ENCODE measurements at regions of chr17 and their contacts with region 1.

Region 1: GRCh38 chr17:7818746-7819645 is 15.0 kb upstream of the KDM6B start:
- DNase-seq: no peak
- ATAC-seq: peak in 1 of 4 donors; percentile 8
- H3K4me3 ChIP-seq: no peak overlapping the region
- H3K27ac ChIP-seq: no peak overlapping the region
- H3K4me1 ChIP-seq: no peaks in the 10 kb centered on the region
- H3K27me3 ChIP-seq: no peaks in the 10 kb centered on the region
- CTCF ChIP-seq: no peak
- POLR2A ChIP-seq: no peak

Region 2: GRCh38 chr17:7745748-7746470 is 73.1 kb before region 1 on chr17:
- intact Hi-C with region 1: loop called in 6 of 10 experiments (anchors 2 to 10 kb)
- DNase-seq: no peak
- ATAC-seq: no peak
- H3K4me3 ChIP-seq: no peak overlapping the region
- H3K27ac ChIP-seq: no peak overlapping the region
- H3K4me1 ChIP-seq: peaks cover 0 to 10% (median 5%) of the 10 kb centered on the region in 12 donors
- H3K27me3 ChIP-seq: peaks cover 0 to 5% (median 0%) of the 10 kb centered on the region in 9 donors
- CTCF ChIP-seq: no peak
- POLR2A ChIP-seq: no peak

Region 3: DNA sequence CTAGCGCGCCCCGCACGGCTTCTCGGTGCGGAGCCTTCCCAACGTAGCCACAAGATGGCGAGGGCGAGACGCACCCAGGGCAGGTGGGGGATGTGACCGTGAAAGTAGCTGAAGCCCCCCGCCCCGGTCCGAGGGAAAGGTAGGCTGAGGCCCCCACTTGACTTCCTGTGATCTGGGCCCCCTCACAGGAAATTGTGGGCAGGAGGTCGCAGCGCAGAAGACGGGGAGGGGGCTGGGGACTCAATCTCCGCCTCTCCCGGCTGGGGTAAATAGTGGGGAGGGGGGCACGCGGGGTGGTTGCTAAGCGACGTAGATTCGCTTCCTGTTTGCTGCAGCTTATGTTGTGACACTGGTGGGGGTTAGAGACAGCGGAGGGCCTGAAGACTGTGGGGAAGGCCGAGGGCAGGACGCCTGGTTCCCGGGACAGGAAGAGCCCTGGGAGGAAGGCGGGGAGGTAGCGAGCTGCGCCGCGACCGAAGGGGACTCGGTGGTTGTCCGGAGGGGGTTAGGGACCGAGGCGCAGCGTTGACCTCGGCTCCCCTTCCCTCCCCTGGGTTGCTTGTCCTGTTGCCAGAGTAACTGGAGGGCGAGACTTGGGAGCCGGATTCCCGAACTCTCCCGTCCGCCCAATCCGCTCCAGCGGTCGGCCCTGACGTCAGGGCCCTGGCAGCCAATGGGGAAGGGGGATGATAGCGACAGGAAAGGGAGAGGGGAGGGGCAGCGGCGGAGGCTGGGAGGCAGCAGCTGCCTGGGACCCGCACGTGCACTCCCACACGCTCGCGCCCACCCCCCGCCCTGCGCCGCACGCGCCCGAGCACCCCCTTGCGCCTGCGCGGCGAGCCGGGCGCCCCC is 16.2 kb after region 1 on chr17:
- intact Hi-C with region 1: no loop called
- DNase-seq: peak; percentile 98 to 99 (median 99)
- ATAC-seq: peak; percentile 79 to 84 (median 82)
- H3K4me3 ChIP-seq: peak overlapping the region; percentile 59 to 99 (median 80)
- H3K27ac ChIP-seq: peak overlapping the region; percentile 86 to 100 (median 98)
- H3K4me1 ChIP-seq: peaks cover 0 to 56% (median 35%) of the 10 kb centered on the region in 12 donors
- H3K27me3 ChIP-seq: no peaks in the 10 kb centered on the region
- CTCF ChIP-seq: peak; percentile 56 to 94 (median 80)
- POLR2A ChIP-seq: peak; percentile 31 to 71

Region 4: DNA sequence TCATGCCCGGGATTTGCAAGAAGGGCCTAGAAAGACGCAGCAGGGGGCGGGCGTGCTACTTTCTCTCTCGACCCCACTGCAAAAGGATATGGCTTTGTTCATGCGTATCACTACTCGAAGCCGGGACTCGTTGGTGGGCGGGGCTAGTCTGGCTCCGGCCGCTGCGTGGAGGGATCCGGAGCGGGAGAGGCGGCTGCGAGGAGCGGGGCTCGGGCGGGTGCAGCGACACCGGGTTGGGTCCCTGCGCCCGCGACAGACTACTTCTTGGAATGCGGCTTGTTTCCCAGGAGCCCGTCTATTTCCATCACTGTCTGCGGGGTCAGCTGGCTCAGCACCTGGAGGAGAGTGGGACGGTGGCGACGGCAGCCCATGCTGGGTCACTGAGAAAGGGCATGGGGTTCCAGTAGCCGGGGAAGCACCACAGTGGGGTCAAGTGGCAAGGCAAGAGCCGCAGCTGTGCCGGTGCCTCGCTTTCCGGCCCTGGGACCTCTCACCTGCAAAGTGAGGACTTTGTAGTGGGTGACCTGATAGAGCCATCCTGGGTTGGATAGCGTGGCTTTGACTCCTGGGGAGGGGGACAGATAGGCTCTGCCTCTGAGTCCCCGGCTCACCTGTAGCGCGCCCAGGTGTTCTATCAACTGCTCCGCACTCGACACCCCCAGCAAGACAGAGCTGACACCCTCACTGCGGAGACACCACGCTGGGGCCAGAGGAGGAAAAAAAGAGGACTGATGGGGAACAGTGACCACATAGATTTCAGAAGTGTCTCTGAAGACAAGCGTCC is 104.0 kb after region 1 on chr17:
- intact Hi-C with region 1: no loop called
- DNase-seq: peak; percentile 88 to 92 (median 90)
- ATAC-seq: peak; percentile 85 to 97 (median 94)
- H3K4me3 ChIP-seq: peak overlapping the region in 11 of 12 donors; percentile 9 to 61 (median 52)
- H3K27ac ChIP-seq: peak overlapping the region; percentile 25 to 81 (median 70)
- H3K4me1 ChIP-seq: peaks cover 0 to 15% (median 9%) of the 10 kb centered on the region in 12 donors
- H3K27me3 ChIP-seq: no peaks in the 10 kb centered on the region
- CTCF ChIP-seq: peak in 1 of 12 donors; percentile 21
- POLR2A ChIP-seq: peak in 1 of 2 donors; percentile 64

Region 5: DNA sequence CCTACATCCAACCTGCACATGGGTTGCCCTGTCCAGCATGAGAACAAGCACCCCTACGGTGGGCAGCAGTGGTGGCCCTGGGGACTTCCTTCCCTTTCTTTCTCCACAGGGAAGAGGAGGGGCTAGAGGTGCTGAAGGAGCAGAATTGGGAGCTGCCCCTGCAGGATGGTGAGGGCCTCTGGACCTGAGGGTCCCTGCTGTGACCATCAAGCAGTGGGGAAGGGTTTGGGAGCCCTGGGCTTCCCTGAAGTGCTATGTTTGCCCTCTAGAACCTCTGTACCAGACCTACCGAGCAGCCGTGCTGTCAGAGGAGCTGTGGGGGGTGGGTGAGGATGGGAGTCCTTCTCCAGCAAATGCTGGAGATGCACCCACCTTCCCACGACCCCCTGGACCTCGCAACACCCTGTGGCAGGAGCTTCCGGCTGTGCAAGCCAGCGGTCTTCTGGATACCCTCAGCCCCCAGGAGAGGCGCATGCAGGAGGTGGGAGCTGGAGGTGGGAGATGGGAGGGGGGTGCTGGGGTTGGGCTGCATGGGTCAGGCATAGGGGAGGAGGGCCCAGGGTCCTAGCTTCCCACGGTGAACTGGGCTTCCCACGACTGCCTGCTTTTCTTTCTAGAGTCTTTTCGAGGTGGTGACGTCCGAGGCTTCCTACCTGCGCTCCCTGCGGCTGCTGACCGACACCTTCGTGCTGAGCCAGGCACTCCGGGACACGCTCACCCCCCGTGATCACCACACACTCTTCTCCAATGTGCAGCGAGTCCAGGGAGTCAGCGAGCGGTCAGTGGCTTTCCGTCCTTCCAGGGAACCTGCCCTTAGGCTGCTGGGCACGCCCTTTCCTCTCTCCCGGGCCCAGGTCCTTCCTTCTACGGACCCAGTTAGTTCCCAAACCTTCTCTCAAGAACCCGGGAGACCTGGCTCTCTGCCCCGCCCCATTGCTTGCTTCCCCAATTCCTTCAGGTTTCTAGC is 496.1 kb after region 1 on chr17:
- intact Hi-C with region 1: no loop called
- DNase-seq: no peak
- ATAC-seq: no peak
- H3K4me3 ChIP-seq: peak overlapping the region in 8 of 12 donors; percentile 0 to 26 (median 6)
- H3K27ac ChIP-seq: no peak overlapping the region
- H3K4me1 ChIP-seq: peaks cover 0 to 36% (median 17%) of the 10 kb centered on the region in 12 donors
- H3K27me3 ChIP-seq: peaks cover 3 to 50% (median 9%) of the 10 kb centered on the region in 9 donors
- CTCF ChIP-seq: no peak
- POLR2A ChIP-seq: no peak